ENCODE measurements at regions of chr2 and their contacts with region 1.

Region 1: GRCh38 chr2:69547984-69548715 is 95.4 kb downstream of the AAK1 start:
- DNase-seq: no peak
- ATAC-seq: no peak
- H3K4me3 ChIP-seq: no peak overlapping the region
- H3K4me3 Mint-ChIP-seq: peak overlapping the region in 5 of 10 donors; percentile 16 to 48 (median 47)
- H3K27ac ChIP-seq: no peak overlapping the region
- H3K27ac Mint-ChIP-seq: peak overlapping the region in 8 of 9 donors; percentile 11 to 79 (median 49)
- H3K4me1 ChIP-seq: peaks cover 0 to 9% of the 10 kb centered on the region in 2 donors
- H3K4me1 Mint-ChIP-seq: peaks cover 21 to 81% (median 67%) of the 10 kb centered on the region in 7 donors
- H3K27me3 ChIP-seq: no peaks in the 10 kb centered on the region
- H3K27me3 Mint-ChIP-seq: no peaks in the 10 kb centered on the region

Region 2: DNA sequence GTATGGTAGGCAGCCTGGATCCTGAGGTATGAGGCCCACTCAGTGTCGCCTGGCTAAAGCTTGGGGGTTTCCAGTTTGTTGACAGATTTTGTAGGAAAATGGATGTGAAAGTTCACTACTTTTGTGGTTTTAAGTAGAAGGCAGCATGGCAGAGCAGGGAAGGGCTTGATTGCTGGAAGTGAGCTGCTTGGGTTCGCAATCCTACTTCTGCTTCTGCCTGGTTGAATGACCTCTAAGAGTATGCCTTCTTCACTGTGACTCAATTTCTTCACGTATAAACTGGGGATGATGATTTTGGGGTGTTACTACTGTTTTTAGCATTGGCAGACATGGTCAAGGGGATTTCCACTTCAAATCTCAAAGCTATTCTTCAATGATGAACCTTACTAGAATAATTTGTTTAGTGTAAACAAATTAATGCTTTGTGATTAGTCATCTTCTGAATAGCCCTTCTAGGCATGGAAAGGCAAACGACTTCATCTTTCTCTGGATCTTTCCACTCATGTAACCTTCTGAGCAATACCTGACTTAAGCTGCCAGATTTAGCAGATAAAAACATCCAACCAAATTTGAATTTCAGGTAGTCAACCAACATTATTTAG is 690.2 kb before region 1 on chr2:
- CTCF ChIA-PET with region 1: no interaction called
- POLR2A ChIA-PET with region 1: no interaction called
- intact Hi-C with region 1: no loop called
- DNase-seq: no peak
- ATAC-seq: peak; percentile 84
- H3K4me3 ChIP-seq: no peak overlapping the region
- H3K4me3 Mint-ChIP-seq: no peak overlapping the region
- H3K27ac ChIP-seq: no peak overlapping the region
- H3K27ac Mint-ChIP-seq: no peak overlapping the region
- H3K4me1 ChIP-seq: no peaks in the 10 kb centered on the region
- H3K4me1 Mint-ChIP-seq: peaks cover 0 to 12% (median 0%) of the 10 kb centered on the region in 7 donors
- H3K27me3 ChIP-seq: no peaks in the 10 kb centered on the region
- H3K27me3 Mint-ChIP-seq: peaks cover 0 to 7% (median 4%) of the 10 kb centered on the region in 5 donors

Region 3: GRCh38 chr2:69453475-69454129 is 94.5 kb before region 1 on chr2:
- CTCF ChIA-PET with region 1: no interaction called
- POLR2A ChIA-PET with region 1: no interaction called
- intact Hi-C with region 1: no loop called
- DNase-seq: no peak
- ATAC-seq: no peak
- H3K4me3 ChIP-seq: no peak overlapping the region
- H3K4me3 Mint-ChIP-seq: no peak overlapping the region
- H3K27ac ChIP-seq: no peak overlapping the region
- H3K27ac Mint-ChIP-seq: peak overlapping the region in 1 of 9 donors; percentile 3
- H3K4me1 ChIP-seq: no peaks in the 10 kb centered on the region
- H3K4me1 Mint-ChIP-seq: peaks cover 10 to 25% (median 18%) of the 10 kb centered on the region in 7 donors
- H3K27me3 ChIP-seq: no peaks in the 10 kb centered on the region
- H3K27me3 Mint-ChIP-seq: peaks cover 0 to 6% (median 0%) of the 10 kb centered on the region in 5 donors

Region 4: GRCh38 chr2:69559442-69560146 is 11.4 kb after region 1 on chr2:
- CTCF ChIA-PET with region 1: interaction called, 6 read pairs
- POLR2A ChIA-PET with region 1: interaction called, 4 read pairs
- intact Hi-C with region 1: loop called in 1 of 2 experiments (anchors 2 kb)
- DNase-seq: peak in 3 of 9 donors; percentile 22 to 32 (median 28)
- ATAC-seq: peak; percentile 75
- H3K4me3 ChIP-seq: no peak overlapping the region
- H3K4me3 Mint-ChIP-seq: peak overlapping the region in 9 of 10 donors; percentile 16 to 78 (median 48)
- H3K27ac ChIP-seq: no peak overlapping the region
- H3K27ac Mint-ChIP-seq: peak overlapping the region in 8 of 9 donors; percentile 10 to 83 (median 57)
- H3K4me1 ChIP-seq: peaks cover 8 to 62% of the 10 kb centered on the region in 2 donors
- H3K4me1 Mint-ChIP-seq: peaks cover 57 to 97% (median 93%) of the 10 kb centered on the region in 7 donors
- H3K27me3 ChIP-seq: no peaks in the 10 kb centered on the region
- H3K27me3 Mint-ChIP-seq: no peaks in the 10 kb centered on the region